ENCODE measurements at regions of chr6 and their contacts with region 1.

Region 1: GRCh38 chr6:102763057-102763456 is 1369.5 kb downstream of the GRIK2 start:
- DNase-seq: no peak
- H3K4me3 Mint-ChIP-seq: no peak overlapping the region
- H3K27ac Mint-ChIP-seq: no peak overlapping the region
- H3K4me1 Mint-ChIP-seq: no peaks in the 10 kb centered on the region
- H3K27me3 Mint-ChIP-seq: no peaks in the 10 kb centered on the region
- CTCF ChIP-seq: no peak

Region 2: GRCh38 chr6:102458990-102459389 is 304.1 kb before region 1 on chr6:
- CTCF ChIA-PET with region 1: interaction called, 11 read pairs
- intact Hi-C with region 1: no loop called
- DNase-seq: no peak
- H3K4me3 Mint-ChIP-seq: no peak overlapping the region
- H3K27ac Mint-ChIP-seq: no peak overlapping the region
- H3K4me1 Mint-ChIP-seq: no peaks in the 10 kb centered on the region
- H3K27me3 Mint-ChIP-seq: no peaks in the 10 kb centered on the region
- CTCF ChIP-seq: no peak

Measured in Calu3 (cell line).